Sigmoid colon (tissue), 7 donors: ENCODE measurements at regions of chr20 and their contacts with region 1.

Region 1: GRCh38 chr20:57469418-57470211 is 55.3 kb downstream of the CTCFL start:
- DNase-seq: peak; percentile 86
- H3K4me3 ChIP-seq: no peak overlapping the region
- H3K27ac ChIP-seq: peak overlapping the region; percentile 73 to 86 (median 83)
- H3K4me1 ChIP-seq: peaks cover 0 to 64% (median 49%) of the 10 kb centered on the region in 4 donors
- H3K27me3 ChIP-seq: no peaks in the 10 kb centered on the region
- CTCF ChIP-seq: no peak
- EP300 ChIP-seq: peak; percentile 85 to 98 (median 92)
- POLR2A ChIP-seq: no peak

Region 2: GRCh38 chr20:57440678-57441520 is 28.7 kb before region 1 on chr20:
- intact Hi-C with region 1: loop called (anchors 2 kb)
- DNase-seq: peak; percentile 97
- H3K4me3 ChIP-seq: no peak overlapping the region
- H3K27ac ChIP-seq: peak overlapping the region; percentile 93 to 99 (median 95)
- H3K4me1 ChIP-seq: peaks cover 0 to 96% (median 89%) of the 10 kb centered on the region in 4 donors
- H3K27me3 ChIP-seq: no peaks in the 10 kb centered on the region
- CTCF ChIP-seq: no peak
- EP300 ChIP-seq: peak; percentile 60 to 95 (median 90)
- POLR2A ChIP-seq: peak; percentile 52 to 73

Region 3: GRCh38 chr20:57451795-57452661 is 17.6 kb before region 1 on chr20:
- intact Hi-C with region 1: no loop called
- DNase-seq: peak; percentile 88
- H3K4me3 ChIP-seq: no peak overlapping the region
- H3K27ac ChIP-seq: peak overlapping the region; percentile 67 to 71 (median 70)
- H3K4me1 ChIP-seq: peaks cover 0 to 42% (median 39%) of the 10 kb centered on the region in 4 donors
- H3K27me3 ChIP-seq: no peaks in the 10 kb centered on the region
- CTCF ChIP-seq: no peak
- EP300 ChIP-seq: peak in 2 of 4 donors; percentile 54 to 57
- POLR2A ChIP-seq: no peak